CD4-positive, alpha-beta memory T cell (primary cell): ENCODE measurements at regions of chr15 and their contacts with region 1.

Region 1: DNA sequence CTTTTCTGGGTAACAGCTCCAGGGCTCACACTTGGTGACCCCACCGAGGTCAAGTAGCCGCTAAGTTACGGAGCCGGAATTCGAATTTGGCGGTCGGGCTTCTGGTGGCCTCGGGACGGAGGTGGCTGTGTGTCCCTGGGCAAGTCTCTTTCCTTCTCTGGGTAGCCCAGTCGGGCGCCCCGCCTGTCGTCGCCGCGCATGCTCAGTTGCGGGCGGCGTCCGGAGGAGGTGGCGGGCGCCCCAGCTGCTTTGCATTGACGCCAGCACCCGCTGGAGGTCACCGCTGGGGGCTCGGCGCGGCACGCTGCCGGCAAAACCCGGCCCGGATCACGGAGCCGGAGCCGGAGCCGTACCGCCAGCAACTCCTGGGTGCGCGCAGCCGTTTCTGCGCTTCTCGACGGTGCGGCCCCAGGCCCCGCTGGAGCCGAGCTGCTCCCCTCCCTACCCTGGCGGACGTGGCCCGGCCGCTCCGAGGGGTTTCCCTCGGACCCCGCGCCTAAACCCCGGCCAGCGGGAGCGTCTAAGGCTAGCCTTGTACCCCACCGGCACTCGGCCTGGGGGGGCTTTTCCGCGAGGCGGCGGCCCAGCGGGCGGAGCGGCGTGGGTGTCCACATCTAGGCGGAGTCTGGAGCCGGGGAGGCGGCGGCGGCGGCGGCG is 474 bp upstream of the PDE8A start:
- DNase-seq: peak; percentile 95 to 99 (median 98)
- H3K4me3 ChIP-seq: peak overlapping the region; percentile 43 to 86
- H3K4me3 Mint-ChIP-seq: peak overlapping the region; percentile 89 to 98 (median 95)
- H3K27ac ChIP-seq: peak overlapping the region; percentile 83
- H3K27ac Mint-ChIP-seq: peak overlapping the region; percentile 94 to 98 (median 97)
- H3K4me1 ChIP-seq: peaks cover 42% of the 10 kb centered on the region
- H3K4me1 Mint-ChIP-seq: peaks cover 24 to 51% (median 38%) of the 10 kb centered on the region in 4 donors
- H3K27me3 ChIP-seq: no peaks in the 10 kb centered on the region
- H3K27me3 Mint-ChIP-seq: no peaks in the 10 kb centered on the region

Region 2: DNA sequence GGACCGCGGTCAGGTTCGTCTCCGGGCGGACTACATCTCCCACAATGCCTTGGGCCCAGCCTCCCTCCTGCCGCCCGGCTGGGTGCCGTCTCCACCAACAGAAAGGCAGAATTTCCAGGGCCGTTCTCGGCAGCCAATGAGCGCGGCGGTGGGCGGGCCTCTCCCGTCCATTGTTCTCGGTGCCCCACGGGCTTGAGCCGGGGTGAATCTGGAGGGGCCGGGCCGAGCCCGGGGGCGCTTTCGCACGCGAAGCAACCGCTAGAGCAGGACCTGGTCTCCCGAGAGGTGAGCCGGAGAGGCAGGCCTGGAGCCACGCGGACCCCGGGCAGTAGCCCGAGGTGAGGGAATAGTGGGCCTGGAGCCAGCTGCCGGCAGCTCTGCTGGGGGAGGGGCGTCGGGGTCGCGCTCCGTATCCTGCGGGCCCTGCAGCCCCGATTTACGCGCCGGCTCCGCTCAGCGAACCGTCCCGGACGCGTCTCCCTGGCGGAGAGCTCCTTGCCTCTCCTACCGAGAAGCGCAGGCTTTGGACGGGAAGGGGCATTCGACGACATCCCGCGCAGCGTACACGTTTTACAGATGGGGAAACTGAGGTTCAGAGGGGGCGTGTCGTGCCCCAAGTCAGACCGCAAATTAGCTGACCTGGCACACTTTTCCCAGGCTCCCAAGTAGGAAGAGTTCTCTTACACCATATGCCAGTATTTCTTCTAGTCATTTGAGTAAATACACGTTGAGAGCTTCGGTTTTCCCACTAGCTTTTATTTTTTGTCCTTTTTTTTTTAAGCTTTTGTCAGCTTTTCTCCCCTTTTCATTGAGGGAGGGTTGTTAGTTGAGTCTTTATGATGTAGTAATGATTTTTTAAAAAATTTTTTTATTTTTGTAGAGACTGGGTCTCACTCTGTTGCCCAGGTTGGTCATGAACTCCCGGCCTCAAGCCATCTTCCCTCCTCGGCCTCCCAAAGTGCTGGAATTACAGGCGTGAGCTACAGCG is 380.0 kb before region 1 on chr15 and contains the start of gene ZSCAN2:
- CTCF ChIA-PET with region 1: no interaction called
- POLR2A ChIA-PET with region 1: interaction called, 4 read pairs
- intact Hi-C with region 1: loop called (anchors 2 kb)
- DNase-seq: peak; percentile 89 to 94 (median 91)
- H3K4me3 ChIP-seq: peak within 1 kb of the TSS; percentile 85 to 93
- H3K4me3 Mint-ChIP-seq: peak within 1 kb of the TSS; percentile 91 to 99 (median 96)
- H3K27ac ChIP-seq: peak within 1 kb of the TSS; percentile 59
- H3K27ac Mint-ChIP-seq: peak within 1 kb of the TSS; percentile 83 to 96 (median 92)
- H3K4me1 ChIP-seq: peaks cover 50% of the 10 kb centered on the region
- H3K4me1 Mint-ChIP-seq: peaks cover 47 to 77% (median 64%) of the 10 kb centered on the region in 4 donors
- H3K27me3 ChIP-seq: no peaks in the 10 kb centered on the region
- H3K27me3 Mint-ChIP-seq: no peaks in the 10 kb centered on the region
- total RNA-seq, gene ZSCAN2: 11.4 to 14.1 TPM

Region 3: GRCh38 chr15:84658080-84658787 is 322.9 kb before region 1 on chr15 and contains the start of gene NMB:
- CTCF ChIA-PET with region 1: interaction called, 3 read pairs
- POLR2A ChIA-PET with region 1: interaction called, 6 read pairs
- intact Hi-C with region 1: loop called (anchors 1 kb)
- DNase-seq: peak; percentile 87 to 90 (median 88)
- H3K4me3 ChIP-seq: peak within 1 kb of the TSS; percentile 39 to 44
- H3K4me3 Mint-ChIP-seq: peak within 1 kb of the TSS; percentile 77 to 87 (median 81)
- H3K27ac ChIP-seq: peak within 1 kb of the TSS; percentile 58
- H3K27ac Mint-ChIP-seq: peak within 1 kb of the TSS; percentile 89 to 98 (median 93)
- H3K4me1 ChIP-seq: peaks cover 34% of the 10 kb centered on the region
- H3K4me1 Mint-ChIP-seq: peaks cover 14 to 52% (median 35%) of the 10 kb centered on the region in 4 donors
- H3K27me3 ChIP-seq: no peaks in the 10 kb centered on the region
- H3K27me3 Mint-ChIP-seq: no peaks in the 10 kb centered on the region
- total RNA-seq, gene NMB: 2.4 to 2.5 TPM

Region 4: GRCh38 chr15:84992157-84992944 is 11.2 kb after region 1 on chr15:
- CTCF ChIA-PET with region 1: interaction called, 8 read pairs
- POLR2A ChIA-PET with region 1: interaction called, 25 read pairs
- intact Hi-C with region 1: loop called (anchors 1 kb)
- DNase-seq: peak in 1 of 5 donors; percentile 61
- H3K4me3 ChIP-seq: no peak overlapping the region
- H3K4me3 Mint-ChIP-seq: peak overlapping the region in 4 of 8 donors; percentile 12 to 55 (median 32)
- H3K27ac ChIP-seq: no peak overlapping the region
- H3K27ac Mint-ChIP-seq: peak overlapping the region in 6 of 7 donors; percentile 1 to 99 (median 76)
- H3K4me1 ChIP-seq: peaks cover 50% of the 10 kb centered on the region
- H3K4me1 Mint-ChIP-seq: peaks cover 38 to 64% (median 49%) of the 10 kb centered on the region in 4 donors
- H3K27me3 ChIP-seq: no peaks in the 10 kb centered on the region
- H3K27me3 Mint-ChIP-seq: no peaks in the 10 kb centered on the region

Region 5: GRCh38 chr15:85005319-85005718 is 24.1 kb after region 1 on chr15:
- CTCF ChIA-PET with region 1: no interaction called
- POLR2A ChIA-PET with region 1: interaction called, 11 read pairs
- intact Hi-C with region 1: no loop called
- DNase-seq: no peak
- H3K4me3 ChIP-seq: no peak overlapping the region
- H3K4me3 Mint-ChIP-seq: no peak overlapping the region
- H3K27ac ChIP-seq: no peak overlapping the region
- H3K27ac Mint-ChIP-seq: no peak overlapping the region
- H3K4me1 ChIP-seq: peaks cover 55% of the 10 kb centered on the region
- H3K4me1 Mint-ChIP-seq: peaks cover 39 to 90% (median 65%) of the 10 kb centered on the region in 4 donors
- H3K27me3 ChIP-seq: no peaks in the 10 kb centered on the region
- H3K27me3 Mint-ChIP-seq: no peaks in the 10 kb centered on the region

Region 6: GRCh38 chr15:85030301-85031049 is 49.3 kb after region 1 on chr15:
- CTCF ChIA-PET with region 1: interaction called, 5 read pairs
- POLR2A ChIA-PET with region 1: interaction called, 17 read pairs
- intact Hi-C with region 1: loop called (anchors 2 kb)
- DNase-seq: peak in 2 of 5 donors; percentile 17 to 51
- H3K4me3 ChIP-seq: no peak overlapping the region
- H3K4me3 Mint-ChIP-seq: peak overlapping the region in 7 of 8 donors; percentile 5 to 76 (median 53)
- H3K27ac ChIP-seq: no peak overlapping the region
- H3K27ac Mint-ChIP-seq: peak overlapping the region; percentile 38 to 86 (median 75)
- H3K4me1 ChIP-seq: peaks cover 55% of the 10 kb centered on the region
- H3K4me1 Mint-ChIP-seq: peaks cover 50 to 77% (median 59%) of the 10 kb centered on the region in 4 donors
- H3K27me3 ChIP-seq: no peaks in the 10 kb centered on the region
- H3K27me3 Mint-ChIP-seq: no peaks in the 10 kb centered on the region

Region 7: DNA sequence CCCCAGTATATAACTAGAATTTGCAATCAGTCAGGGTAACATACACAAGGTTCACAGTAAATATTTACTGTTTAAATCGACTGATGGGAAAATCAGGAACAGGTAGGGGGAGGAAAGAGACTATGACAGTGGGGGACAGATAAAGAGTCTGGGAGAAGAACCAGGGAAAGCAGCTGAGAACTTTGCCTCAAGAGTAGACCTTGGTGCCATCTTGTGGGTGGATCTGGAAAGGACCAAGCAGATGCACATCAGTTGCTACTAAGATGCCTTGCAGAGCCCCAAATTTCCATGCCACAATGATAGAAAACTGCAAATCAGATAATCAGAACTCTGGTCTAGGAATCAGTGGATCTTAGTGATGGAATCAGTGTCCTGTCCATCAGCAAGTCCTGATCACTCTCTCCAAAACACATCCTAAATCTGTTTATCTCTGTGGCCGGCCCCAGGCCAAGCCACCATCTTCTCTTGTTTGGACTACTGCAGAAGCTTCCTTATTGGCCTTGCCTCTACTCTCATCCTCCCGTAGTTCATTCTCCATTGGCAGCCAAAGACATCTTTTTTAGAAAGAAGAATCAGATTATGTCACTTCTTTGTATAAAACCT is 63.2 kb after region 1 on chr15:
- CTCF ChIA-PET with region 1: interaction called, 7 read pairs
- POLR2A ChIA-PET with region 1: interaction called, 15 read pairs
- intact Hi-C with region 1: loop called (anchors 1 kb)
- DNase-seq: peak; percentile 31 to 46 (median 35)
- H3K4me3 ChIP-seq: no peak overlapping the region
- H3K4me3 Mint-ChIP-seq: no peak overlapping the region
- H3K27ac ChIP-seq: no peak overlapping the region
- H3K27ac Mint-ChIP-seq: peak overlapping the region in 5 of 7 donors; percentile 11 to 64 (median 50)
- H3K4me1 ChIP-seq: peaks cover 12% of the 10 kb centered on the region
- H3K4me1 Mint-ChIP-seq: peaks cover 12 to 37% (median 21%) of the 10 kb centered on the region in 4 donors
- H3K27me3 ChIP-seq: no peaks in the 10 kb centered on the region
- H3K27me3 Mint-ChIP-seq: no peaks in the 10 kb centered on the region

Region 8: GRCh38 chr15:85142312-85142711 is 161.1 kb after region 1 on chr15:
- CTCF ChIA-PET with region 1: no interaction called
- POLR2A ChIA-PET with region 1: no interaction called
- intact Hi-C with region 1: no loop called
- DNase-seq: no peak
- H3K4me3 ChIP-seq: no peak overlapping the region
- H3K4me3 Mint-ChIP-seq: no peak overlapping the region
- H3K27ac ChIP-seq: no peak overlapping the region
- H3K27ac Mint-ChIP-seq: no peak overlapping the region
- H3K4me1 ChIP-seq: no peaks in the 10 kb centered on the region
- H3K4me1 Mint-ChIP-seq: peaks cover 0 to 1% (median 0%) of the 10 kb centered on the region in 4 donors
- H3K27me3 ChIP-seq: no peaks in the 10 kb centered on the region
- H3K27me3 Mint-ChIP-seq: peaks cover 0 to 2% of the 10 kb centered on the region in 2 donors